Calu3 (cell line): ENCODE measurements at regions of chr2 and their contacts with region 1.

Region 1: DNA sequence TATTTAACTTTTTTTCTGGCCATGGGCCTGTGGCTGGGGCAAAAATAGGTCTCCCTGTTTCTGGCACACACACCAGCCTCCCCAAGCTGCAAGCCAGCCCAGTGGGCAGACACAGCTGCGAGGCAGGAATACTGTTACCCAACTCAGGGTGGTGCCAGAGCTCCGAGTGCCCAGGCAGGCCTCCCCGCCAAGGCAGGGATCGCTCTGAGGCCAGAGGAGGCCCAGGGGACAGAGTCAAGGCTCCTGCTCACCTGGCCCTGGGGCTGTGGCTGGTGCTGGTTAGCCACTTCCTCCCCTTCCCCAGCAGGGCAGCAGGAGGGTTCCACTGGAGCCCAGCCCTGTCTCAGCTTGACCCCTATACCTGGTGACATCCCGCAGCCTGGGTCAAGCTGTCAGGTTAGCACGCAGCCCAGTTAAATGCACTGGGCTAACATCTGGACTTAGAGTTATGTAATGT is 67.1 kb upstream of the EPAS1 start:
- DNase-seq: peak; percentile 72
- H3K4me3 Mint-ChIP-seq: peak overlapping the region; percentile 14
- H3K27ac Mint-ChIP-seq: peak overlapping the region; percentile 90
- H3K4me1 Mint-ChIP-seq: peaks cover 54% of the 10 kb centered on the region
- H3K27me3 Mint-ChIP-seq: no peaks in the 10 kb centered on the region
- CTCF ChIP-seq: no peak

Region 2: DNA sequence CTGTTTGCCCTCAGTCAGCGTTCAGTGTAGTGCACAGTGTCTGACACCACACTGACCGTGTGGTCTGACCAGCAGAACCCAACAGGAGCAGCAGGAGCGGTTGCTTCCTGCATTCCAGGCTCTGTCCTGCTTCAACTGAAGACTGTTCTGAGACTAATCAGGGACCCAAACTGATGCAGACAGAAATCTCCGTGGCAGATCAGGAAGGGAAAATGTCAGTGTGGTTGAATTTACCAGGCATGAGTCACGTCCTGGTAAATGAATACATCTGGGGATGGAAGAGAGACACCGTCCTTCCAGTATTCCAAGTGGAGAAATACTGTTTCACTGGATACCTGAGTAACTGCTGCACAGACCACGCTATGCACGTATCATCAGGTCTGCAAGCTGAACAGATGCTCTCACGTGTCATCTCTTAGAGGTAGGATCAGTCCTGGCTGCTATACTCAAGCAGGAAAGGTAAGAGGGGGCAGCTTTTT is 156.6 kb before region 1 on chr2:
- CTCF ChIA-PET with region 1: no interaction called
- intact Hi-C with region 1: loop called (anchors 5 kb)
- DNase-seq: peak; percentile 53
- H3K4me3 Mint-ChIP-seq: peak overlapping the region; percentile 54
- H3K27ac Mint-ChIP-seq: peak overlapping the region; percentile 84
- H3K4me1 Mint-ChIP-seq: peaks cover 31% of the 10 kb centered on the region
- H3K27me3 Mint-ChIP-seq: no peaks in the 10 kb centered on the region
- CTCF ChIP-seq: no peak

Region 3: GRCh38 chr2:46296840-46297545 is 66.8 kb after region 1 on chr2 and contains the start of gene EPAS1:
- CTCF ChIA-PET with region 1: interaction called, 7 read pairs
- intact Hi-C with region 1: loop called (anchors 5 kb)
- DNase-seq: peak; percentile 80
- H3K4me3 Mint-ChIP-seq: peak within 1 kb of the TSS; percentile 95
- H3K27ac Mint-ChIP-seq: peak within 1 kb of the TSS; percentile 11
- H3K4me1 Mint-ChIP-seq: peaks cover 15% of the 10 kb centered on the region
- H3K27me3 Mint-ChIP-seq: no peaks in the 10 kb centered on the region
- CTCF ChIP-seq: no peak
- total RNA-seq, gene EPAS1: 18.5 and 28.1 TPM in 2 replicates